SK-N-SH (cell line): ENCODE measurements at regions of chr9 and their contacts with region 1.

Region 1: DNA sequence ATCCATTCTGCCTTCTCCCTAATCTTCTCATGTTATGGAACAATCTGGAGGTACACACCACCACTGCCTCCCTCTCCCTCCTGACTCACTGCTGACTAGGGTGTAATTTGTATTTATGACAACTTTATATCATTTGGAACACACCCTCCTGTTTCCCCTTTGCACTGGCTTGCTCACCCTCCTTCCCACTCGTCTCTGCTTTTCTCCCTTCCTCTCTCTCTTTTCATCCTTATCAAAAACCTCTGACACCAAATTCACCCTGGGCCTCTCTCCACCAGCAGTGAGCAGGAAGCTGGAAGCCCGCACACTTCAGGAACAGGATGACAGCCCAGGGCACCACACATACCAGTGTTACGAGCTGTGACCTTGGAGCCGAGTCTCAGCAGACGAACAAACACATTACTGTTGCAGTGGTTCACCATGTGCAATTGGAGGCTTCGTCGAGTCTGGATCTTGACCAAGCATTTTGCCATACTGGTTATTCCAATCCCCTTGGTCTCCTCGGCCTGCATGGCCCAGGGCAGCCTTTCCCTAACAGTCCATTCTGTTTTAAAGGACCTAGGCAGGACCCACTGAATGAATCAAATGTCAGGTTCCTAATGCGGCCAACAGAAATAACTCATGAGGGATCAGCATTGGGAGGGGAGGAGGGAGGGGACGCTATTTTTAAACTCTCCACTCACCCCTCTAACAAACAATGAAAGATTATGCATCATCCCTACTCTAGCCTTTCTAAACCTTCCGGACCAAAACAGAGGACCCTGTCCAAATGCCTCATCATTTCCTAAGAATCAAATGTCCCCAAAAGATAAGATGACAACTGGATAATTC is 203.9 kb upstream of the RASEF start:
- DNase-seq: no peak
- H3K4me3 ChIP-seq: no peak overlapping the region
- H3K27ac ChIP-seq: peak overlapping the region in 1 of 2 experiments; percentile 55; a peak in 3 of 4 replicates
- H3K4me1 ChIP-seq: peaks cover 0 to 19% of the 10 kb centered on the region in 2 experiments; a peak in 2 of 4 replicates
- H3K27me3 ChIP-seq: no peaks in the 10 kb centered on the region
- CTCF ChIP-seq: no peak
- EP300 ChIP-seq: no peak
- RAD21 ChIP-seq: no peak

Region 2: DNA sequence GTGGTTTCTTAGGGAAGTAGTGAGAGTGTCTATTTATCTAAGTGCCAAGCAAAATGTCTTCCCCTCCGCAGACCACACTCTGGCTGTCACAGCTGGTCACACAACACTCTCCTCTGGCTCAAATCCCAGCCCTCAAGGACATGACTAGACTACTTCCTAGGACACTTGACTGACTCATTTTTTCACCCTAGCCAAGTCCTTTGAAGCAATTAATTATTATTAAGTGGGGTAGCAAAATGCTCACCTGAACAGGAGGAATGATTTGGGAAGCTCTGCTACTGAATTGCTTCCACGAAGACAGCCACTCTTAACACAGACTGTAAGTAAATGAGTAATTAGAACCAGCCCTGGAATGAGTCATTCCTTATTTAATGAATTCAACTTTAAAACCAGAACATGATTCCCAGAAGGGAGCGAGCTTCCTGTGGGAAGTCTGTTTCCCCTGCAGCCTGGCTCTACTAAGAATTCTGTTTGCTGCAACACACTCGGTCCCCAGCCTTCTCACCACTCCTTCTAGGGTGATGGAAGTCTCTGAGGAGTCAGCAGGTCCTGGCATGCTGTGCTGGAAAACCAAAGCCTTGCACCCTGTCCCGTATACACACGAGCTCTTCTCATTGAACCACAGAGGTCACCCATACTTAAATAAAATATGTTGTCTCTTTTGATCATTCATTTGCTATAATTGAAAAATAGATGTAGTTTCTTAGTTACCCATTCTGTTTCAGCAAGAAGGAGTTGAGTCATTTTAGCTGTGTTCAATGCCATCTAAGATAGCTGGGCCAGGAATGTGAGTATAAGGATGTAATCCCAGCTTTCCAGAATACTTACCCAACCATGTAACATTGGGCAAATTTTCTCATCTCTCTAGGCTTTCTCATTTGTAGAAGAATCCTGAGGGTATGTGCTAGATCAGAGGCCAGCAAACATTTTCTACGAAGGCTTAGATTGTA is 14.7 kb after region 1 on chr9:
- CTCF ChIA-PET with region 1: interaction called, 10 read pairs
- POLR2A ChIA-PET with region 1: no interaction called
- DNase-seq: peak; percentile 43
- H3K4me3 ChIP-seq: peak overlapping the region; percentile 3 to 32; a peak in 3 of 4 replicates
- H3K27ac ChIP-seq: peak overlapping the region; percentile 88 to 96
- H3K4me1 ChIP-seq: peaks cover 19 to 22% of the 10 kb centered on the region in 2 experiments
- H3K27me3 ChIP-seq: no peaks in the 10 kb centered on the region
- CTCF ChIP-seq: no peak
- EP300 ChIP-seq: peak in 1 of 2 experiments; percentile 66; a peak in 1 of 4 replicates
- RAD21 ChIP-seq: no peak; the same call in 1 of the 2 replicates

Region 3: GRCh38 chr9:83299571-83299970 is 32.7 kb after region 1 on chr9:
- CTCF ChIA-PET with region 1: no interaction called
- POLR2A ChIA-PET with region 1: no interaction called
- DNase-seq: no peak
- H3K4me3 ChIP-seq: no peak overlapping the region
- H3K27ac ChIP-seq: no peak overlapping the region
- H3K4me1 ChIP-seq: peaks cover 13 to 21% of the 10 kb centered on the region in 2 experiments
- H3K27me3 ChIP-seq: no peaks in the 10 kb centered on the region
- CTCF ChIP-seq: no peak
- EP300 ChIP-seq: no peak
- RAD21 ChIP-seq: no peak

Region 4: DNA sequence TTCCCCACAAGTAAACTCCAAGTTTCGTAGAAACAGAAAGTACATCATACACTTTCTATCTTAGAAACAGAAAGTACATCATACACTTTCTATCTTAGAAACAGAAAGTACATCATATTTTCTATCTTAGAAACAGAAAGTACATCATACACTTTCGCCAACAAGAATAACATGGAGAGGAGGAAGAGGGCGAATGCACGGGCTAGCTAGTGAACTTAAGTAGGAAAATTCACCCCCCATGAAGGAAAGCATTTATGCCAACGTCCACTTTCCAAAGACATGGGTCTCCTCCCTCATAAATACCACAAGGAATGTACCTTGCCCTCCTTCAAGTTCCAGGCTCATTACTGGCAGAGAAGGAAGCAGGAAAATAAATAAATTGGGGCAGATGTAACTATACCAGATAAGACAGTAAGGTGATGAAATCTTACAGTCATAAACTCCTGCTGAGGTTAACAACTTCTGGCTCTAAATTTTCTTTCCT is 206.6 kb after region 1 on chr9:
- CTCF ChIA-PET with region 1: no interaction called
- POLR2A ChIA-PET with region 1: no interaction called
- DNase-seq: no peak
- H3K4me3 ChIP-seq: 0 out of 4 replicates have a peak overlapping the region, but pooled peaks of 1 of the 2 experiments have one; percentile 16
- H3K27ac ChIP-seq: peak overlapping the region in 1 of 2 experiments; percentile 71; a peak in 2 of 4 replicates
- H3K4me1 ChIP-seq: peaks cover 5 to 14% of the 10 kb centered on the region in 2 experiments; a peak in 3 of 4 replicates
- H3K27me3 ChIP-seq: no peaks in the 10 kb centered on the region
- CTCF ChIP-seq: no peak
- EP300 ChIP-seq: no peak
- RAD21 ChIP-seq: no peak